Activated T-helper 1 cell treated with anti-CD3 and anti-CD28 coated beads, Interleukin-12 subunit alpha, Interleukin-12 subunit beta, Interleukin-2, Interleukin-4 antibody, amounts not matched to agents 30 ng/mL and 10 ng/mL and 1 ng/mL, durations not matched to agents 14 hours and 24 hours and 36 hours (primary cell): ENCODE measurements at regions of chr4 and their contacts with region 1.

Region 1: DNA sequence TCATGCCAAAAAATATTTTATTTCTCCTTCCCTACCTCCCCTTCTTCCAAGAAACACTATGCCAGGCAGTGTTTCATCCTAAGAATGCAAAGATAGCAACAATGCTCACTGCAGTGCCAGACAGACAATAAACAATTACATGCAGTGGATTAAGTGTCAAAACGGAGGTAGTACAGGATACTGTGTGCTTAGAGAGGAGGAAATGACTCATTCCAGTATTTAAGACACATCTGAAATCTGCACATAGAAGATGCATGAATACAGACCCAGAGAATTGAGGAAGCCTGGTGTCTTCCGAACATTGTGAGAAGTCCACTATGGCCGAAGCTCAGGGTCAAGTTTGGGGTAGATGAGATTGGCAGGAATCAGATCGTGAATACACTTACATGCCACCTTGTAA is 326.4 kb downstream of the PPP3CA start:
- DNase-seq: peak; percentile 16
- H3K4me3 Mint-ChIP-seq: peak overlapping the region; percentile 43
- H3K27ac Mint-ChIP-seq: peak overlapping the region; percentile 67
- H3K4me1 Mint-ChIP-seq: peaks cover 62% of the 10 kb centered on the region
- H3K27me3 Mint-ChIP-seq: no peaks in the 10 kb centered on the region

Region 2: GRCh38 chr4:99563310-99564186 is 1457.4 kb before region 1 on chr4 and contains the start of gene TRMT10A:
- intact Hi-C with region 1: loop called (anchors 5 kb)
- DNase-seq: peak; percentile 92
- H3K4me3 Mint-ChIP-seq: peak within 1 kb of the TSS; percentile 89
- H3K27ac Mint-ChIP-seq: peak within 1 kb of the TSS; percentile 96
- H3K4me1 Mint-ChIP-seq: peaks cover 25% of the 10 kb centered on the region
- H3K27me3 Mint-ChIP-seq: peaks cover 11% of the 10 kb centered on the region
- total RNA-seq, gene TRMT10A: 7.3 TPM in 2 replicates

Region 3: DNA sequence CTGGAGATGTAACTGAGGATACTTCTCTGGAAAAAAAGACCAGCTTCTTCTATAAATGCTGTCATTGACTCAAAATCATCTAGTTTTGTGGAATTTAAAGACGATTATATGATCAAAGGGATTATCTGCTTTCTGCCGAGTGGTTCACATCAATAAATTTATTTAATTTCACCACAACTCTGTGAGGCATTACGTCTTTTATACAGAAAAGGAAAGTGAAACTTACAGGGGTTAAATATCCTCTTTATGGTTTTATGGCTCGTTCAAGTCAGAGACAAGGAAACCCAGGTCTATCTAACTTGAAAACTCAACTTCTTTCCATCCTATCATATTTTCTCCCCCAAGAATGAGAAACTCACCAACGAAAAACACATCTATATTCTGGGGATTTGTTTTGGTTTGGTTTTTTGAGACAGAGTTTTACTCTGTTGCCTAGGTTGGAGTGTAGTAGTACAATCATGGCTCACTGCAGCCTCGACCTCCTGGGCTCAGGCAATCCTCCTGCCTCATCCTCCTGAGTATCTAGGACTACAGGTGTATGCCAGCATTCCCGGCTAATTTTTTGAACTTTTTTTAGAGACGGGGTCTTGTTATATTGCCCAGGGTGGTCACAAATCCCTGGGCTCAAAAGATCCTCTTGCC is 125.3 kb before region 1 on chr4:
- intact Hi-C with region 1: loop called (anchors 2 kb)
- DNase-seq: no peak
- H3K4me3 Mint-ChIP-seq: peak overlapping the region; percentile 67
- H3K27ac Mint-ChIP-seq: peak overlapping the region; percentile 15
- H3K4me1 Mint-ChIP-seq: peaks cover 18% of the 10 kb centered on the region
- H3K27me3 Mint-ChIP-seq: no peaks in the 10 kb centered on the region

Region 4: DNA sequence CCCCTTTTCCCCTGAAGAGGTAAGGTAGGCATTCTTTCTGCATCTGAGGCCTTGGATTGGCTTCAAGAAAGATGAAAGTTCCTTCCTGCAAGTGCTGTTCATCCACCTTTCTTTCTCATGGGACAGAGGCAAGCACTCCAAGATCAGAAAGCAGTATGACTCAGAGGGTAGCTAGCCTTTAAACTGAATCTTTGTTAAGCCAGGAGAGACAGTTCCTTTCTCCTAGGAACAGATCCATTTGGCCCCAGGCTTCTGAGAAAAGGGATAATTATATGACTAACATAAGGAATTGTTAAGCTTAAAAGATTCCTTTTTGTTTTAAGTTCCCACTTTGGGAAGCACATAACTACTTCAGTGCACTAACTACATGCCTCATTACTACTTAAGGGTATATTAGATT is 134.4 kb after region 1 on chr4:
- intact Hi-C with region 1: loop called (anchors 2 kb)
- DNase-seq: no peak
- H3K4me3 Mint-ChIP-seq: no peak overlapping the region
- H3K27ac Mint-ChIP-seq: no peak overlapping the region
- H3K4me1 Mint-ChIP-seq: peaks cover 28% of the 10 kb centered on the region
- H3K27me3 Mint-ChIP-seq: no peaks in the 10 kb centered on the region

Region 5: DNA sequence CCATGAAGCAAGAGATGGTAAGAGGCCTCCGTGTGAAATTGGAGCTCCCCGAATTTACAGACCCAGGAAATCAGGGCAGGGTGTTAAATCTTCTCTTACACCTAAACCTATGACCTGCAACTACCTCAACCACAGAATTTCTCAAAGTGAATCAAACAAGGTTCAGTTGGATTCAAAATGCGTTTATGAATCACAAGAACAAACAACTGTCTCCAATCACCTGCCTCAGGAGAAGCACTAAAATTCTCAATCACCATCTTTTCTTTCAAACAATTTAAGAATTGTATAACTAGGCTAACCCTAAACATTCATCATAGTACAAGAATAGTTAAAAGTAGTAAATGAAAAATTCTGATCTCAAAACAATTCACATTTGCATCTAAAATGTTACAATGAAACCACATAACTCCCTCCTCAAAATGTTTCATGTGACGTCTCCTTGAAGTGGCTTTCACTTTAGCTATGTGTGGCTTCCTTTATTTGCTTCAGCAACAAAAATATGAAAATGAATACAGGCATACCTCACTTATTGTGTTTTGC is 307.2 kb after region 1 on chr4:
- intact Hi-C with region 1: loop called (anchors 1 kb)
- DNase-seq: peak; percentile 21
- H3K4me3 Mint-ChIP-seq: peak overlapping the region; percentile 45
- H3K27ac Mint-ChIP-seq: peak overlapping the region; percentile 81
- H3K4me1 Mint-ChIP-seq: peaks cover 31% of the 10 kb centered on the region
- H3K27me3 Mint-ChIP-seq: peaks cover 24% of the 10 kb centered on the region

Region 6: DNA sequence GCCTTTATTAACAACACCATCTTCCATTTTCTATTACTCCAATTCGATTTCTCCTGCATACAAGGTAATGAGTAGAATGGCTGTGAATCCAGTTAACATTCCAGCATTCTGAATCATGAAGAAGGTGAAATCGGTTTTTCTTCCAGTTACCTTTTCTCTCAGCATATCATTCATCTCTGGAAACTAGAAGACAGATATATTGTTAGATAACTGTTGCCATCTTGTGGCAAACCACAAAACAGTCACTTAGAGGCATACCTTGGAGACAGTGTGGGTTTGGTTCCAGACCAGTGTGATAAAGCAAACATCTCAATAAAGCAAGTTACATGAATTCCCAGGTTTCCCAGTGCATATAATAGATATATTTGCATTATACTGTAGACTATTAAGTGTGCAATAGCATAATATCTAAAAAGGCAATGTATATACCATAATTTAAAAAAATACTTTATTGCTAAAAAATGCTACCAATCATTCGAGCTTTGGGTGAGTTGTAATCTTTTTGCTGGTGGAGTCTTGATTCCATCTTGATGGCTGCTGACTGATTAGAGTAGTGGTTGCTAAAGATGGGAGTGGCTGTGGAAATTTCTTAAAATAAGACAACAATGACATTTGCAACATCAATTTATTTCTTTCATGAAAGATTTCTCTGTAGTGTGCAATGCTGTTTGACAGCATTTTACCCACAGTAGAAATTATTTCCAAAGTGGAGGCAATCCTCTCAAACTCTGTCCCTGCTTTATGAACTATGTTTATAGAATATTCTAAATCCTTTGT is 1242.2 kb after region 1 on chr4:
- intact Hi-C with region 1: loop called (anchors 10 kb)
- DNase-seq: no peak
- H3K4me3 Mint-ChIP-seq: no peak overlapping the region
- H3K27ac Mint-ChIP-seq: peak overlapping the region; percentile 19
- H3K4me1 Mint-ChIP-seq: peaks cover 16% of the 10 kb centered on the region
- H3K27me3 Mint-ChIP-seq: no peaks in the 10 kb centered on the region